ENCODE measurements at regions of chr4 and their contacts with region 1.

Region 1: GRCh38 chr4:4256799-4257198 is 8.8 kb upstream of the TMEM128 start:
- DNase-seq: peak in 1 of 5 donors; percentile 38
- ATAC-seq: peak in 2 of 4 donors; percentile 33 to 86
- H3K4me3 ChIP-seq: no peak overlapping the region
- H3K27ac ChIP-seq: no peak overlapping the region
- H3K4me1 ChIP-seq: peaks cover 0 to 20% (median 0%) of the 10 kb centered on the region in 12 donors
- H3K27me3 ChIP-seq: no peaks in the 10 kb centered on the region
- CTCF ChIP-seq: no peak
- POLR2A ChIP-seq: no peak

Region 2: DNA sequence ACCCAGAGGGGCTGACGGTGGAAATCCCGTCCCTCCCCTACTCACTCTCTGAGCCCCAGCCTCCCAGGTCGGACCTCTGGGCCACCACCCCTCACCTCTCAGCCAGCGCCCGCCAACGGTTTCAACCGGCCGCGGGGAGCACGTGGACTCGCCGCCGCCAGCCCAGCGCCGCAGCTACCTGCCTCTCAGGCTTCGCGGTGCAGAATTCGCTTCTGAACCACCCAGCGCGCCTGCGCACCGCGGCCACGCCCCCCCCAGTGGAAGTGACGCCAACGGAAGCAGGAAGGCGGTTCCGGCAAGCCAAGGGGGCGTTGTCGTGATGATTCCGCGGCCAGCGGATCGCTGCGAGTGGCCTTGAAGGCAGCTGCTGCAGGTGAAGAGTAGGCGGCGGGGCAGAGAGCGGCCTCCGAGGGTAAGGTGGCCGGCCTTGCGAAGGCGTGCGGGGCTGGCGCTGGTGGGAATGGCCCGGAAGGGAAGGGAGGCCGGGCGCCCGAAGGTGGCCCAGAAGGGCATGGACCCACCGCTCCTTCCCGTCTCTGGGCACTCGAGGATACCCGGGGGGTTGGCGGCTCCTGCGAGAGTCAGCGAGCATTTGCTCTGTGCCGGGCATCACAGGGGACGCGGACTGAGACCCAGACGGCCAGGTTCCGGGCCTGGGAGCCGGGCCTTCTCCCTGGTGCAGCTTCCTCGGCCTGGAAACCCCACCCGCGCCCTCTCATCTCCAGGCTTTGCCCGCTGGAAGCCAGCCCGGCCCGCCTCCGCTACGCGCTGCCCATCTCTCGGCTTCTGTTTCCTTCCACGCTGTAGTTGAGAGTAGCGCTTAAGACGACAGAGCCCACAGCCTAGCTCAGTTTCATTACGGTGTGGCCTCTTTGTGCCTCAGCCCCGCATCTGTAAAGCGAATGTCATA is 33.4 kb after region 1 on chr4 and contains the starts of genes LYAR and ZBTB49:
- intact Hi-C with region 1: loop called in 1 of 10 experiments (anchors 5 kb)
- DNase-seq: peak; percentile 91 to 97 (median 95)
- ATAC-seq: peak; percentile 90 to 98 (median 96)
- H3K4me3 ChIP-seq: peak within 1 kb of the TSS; percentile 65 to 97 (median 88)
- H3K27ac ChIP-seq: peak within 1 kb of the TSS in 11 of 12 donors; percentile 77 to 88 (median 84)
- H3K4me1 ChIP-seq: peaks cover 0 to 50% (median 24%) of the 10 kb centered on the region in 12 donors
- H3K27me3 ChIP-seq: no peaks in the 10 kb centered on the region
- CTCF ChIP-seq: peak in 2 of 12 donors; percentile 11 to 12
- POLR2A ChIP-seq: peak in 1 of 2 donors; percentile 71
- total RNA-seq, gene LYAR: 8.6 to 15.6 (median 12.2) TPM
- total RNA-seq, gene ZBTB49: 2.9 to 6.7 (median 4.7) TPM

Region 3: DNA sequence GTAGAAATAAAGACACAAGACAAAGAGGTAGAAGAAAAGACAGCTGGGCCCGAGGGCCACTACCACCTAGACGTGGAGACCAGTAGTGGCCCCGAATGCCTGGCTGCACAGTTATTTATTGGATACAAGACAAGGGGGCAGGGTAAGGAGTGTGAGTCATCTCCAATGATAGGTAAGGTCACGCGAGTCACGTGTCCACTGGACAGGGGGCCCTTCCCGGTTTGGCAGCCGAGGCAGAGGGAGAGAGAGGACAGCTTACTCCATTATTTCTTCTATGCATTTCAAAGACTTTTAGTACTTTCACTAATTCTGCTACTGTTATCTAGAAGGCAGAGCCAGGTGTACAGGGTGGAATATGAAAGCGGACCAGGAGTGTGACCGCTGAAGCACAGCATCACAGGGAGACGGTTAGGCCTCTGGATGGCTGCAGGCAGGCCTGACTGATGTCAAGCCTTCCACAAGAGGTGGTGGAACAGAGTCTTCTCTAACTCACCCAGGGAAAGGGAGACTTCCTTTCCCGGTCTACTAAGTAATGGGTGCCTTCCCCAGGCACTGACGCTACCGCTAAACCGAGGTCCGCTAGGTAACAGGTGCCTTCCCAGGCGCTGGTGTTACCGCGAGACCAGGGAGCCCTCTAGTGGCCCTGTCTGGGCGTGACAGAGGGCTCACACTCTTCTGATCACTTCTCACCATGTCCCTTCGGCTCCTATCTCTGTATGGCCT is 78.2 kb after region 1 on chr4:
- intact Hi-C with region 1: loop called (anchors 1 to 5 kb)
- DNase-seq: peak; percentile 42 to 76 (median 65)
- ATAC-seq: peak in 3 of 4 donors; percentile 25 to 57 (median 44)
- H3K4me3 ChIP-seq: no peak overlapping the region
- H3K27ac ChIP-seq: no peak overlapping the region
- H3K4me1 ChIP-seq: peaks cover 0 to 10% (median 4%) of the 10 kb centered on the region in 12 donors
- H3K27me3 ChIP-seq: peaks cover 0 to 6% (median 0%) of the 10 kb centered on the region in 9 donors
- CTCF ChIP-seq: peak; percentile 58 to 89 (median 76)
- POLR2A ChIP-seq: no peak

Region 4: GRCh38 chr4:4426511-4427477 is 170.0 kb after region 1 on chr4:
- intact Hi-C with region 1: loop called in 2 of 10 experiments (anchors 5 to 10 kb)
- DNase-seq: peak in 1 of 5 donors; percentile 7
- ATAC-seq: no peak
- H3K4me3 ChIP-seq: no peak overlapping the region
- H3K27ac ChIP-seq: no peak overlapping the region
- H3K4me1 ChIP-seq: no peaks in the 10 kb centered on the region
- H3K27me3 ChIP-seq: no peaks in the 10 kb centered on the region
- CTCF ChIP-seq: no peak
- POLR2A ChIP-seq: no peak

Measured in heart left ventricle (tissue), 16 donors.